Calu3 (cell line): ENCODE measurements at regions of chr1 and their contacts with region 1.

Region 1: DNA sequence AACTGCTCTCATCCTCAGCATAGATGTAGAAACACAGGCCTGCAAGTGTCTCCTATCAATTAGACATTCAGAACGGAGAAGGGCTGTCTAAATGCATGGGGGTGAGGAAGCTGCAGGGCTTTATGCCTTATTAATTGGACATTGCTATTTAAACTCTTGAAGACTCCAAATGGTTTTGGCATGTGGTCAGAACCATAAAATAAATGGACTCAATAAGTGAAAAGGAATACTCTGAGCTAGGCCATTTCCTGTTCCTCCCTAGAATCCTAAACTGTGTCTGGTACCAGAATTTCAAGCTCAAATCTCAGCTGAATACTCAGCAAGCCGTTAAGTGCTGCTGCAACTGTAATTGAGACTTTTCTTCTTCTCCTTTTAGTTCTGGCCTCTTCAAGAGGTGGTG is 80.4 kb upstream of the C1orf87 start:
- DNase-seq: no peak
- H3K4me3 Mint-ChIP-seq: no peak overlapping the region
- H3K27ac Mint-ChIP-seq: no peak overlapping the region
- H3K4me1 Mint-ChIP-seq: no peaks in the 10 kb centered on the region
- H3K27me3 Mint-ChIP-seq: no peaks in the 10 kb centered on the region
- CTCF ChIP-seq: no peak

Region 2: DNA sequence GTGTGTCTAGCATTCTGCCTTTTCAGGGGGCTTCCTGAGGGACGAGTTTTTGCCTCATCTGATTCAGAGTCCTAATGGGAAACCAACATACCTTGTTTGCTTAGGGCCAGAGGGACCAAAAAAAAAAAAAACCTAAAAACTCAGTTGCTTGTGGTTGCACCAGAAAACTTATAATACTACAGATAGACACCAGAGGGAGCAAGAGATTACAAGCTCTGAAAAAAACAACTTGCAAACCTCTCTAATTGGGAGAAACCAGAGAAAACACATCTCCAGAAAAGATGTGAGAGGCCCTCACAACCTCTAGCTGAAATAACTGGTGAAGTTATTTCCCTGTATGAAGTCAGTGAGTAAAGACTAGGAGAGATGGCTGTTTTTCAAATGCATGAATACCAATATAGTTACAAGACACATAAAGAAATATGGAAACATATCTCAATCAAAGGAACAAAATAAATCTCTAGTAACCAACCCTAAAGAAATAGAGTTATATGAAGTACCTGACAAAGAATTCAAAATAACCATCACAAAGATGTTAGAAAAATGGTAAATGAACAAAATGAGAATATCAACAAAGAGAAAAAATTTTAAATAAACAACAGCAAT is 694.7 kb after region 1 on chr1:
- CTCF ChIA-PET with region 1: interaction called, 3 read pairs
- intact Hi-C with region 1: loop called (anchors 2 kb)
- DNase-seq: no peak
- H3K4me3 Mint-ChIP-seq: no peak overlapping the region
- H3K27ac Mint-ChIP-seq: peak overlapping the region; percentile 49
- H3K4me1 Mint-ChIP-seq: peaks cover 20% of the 10 kb centered on the region
- H3K27me3 Mint-ChIP-seq: no peaks in the 10 kb centered on the region
- CTCF ChIP-seq: peak; percentile 60

Region 3: DNA sequence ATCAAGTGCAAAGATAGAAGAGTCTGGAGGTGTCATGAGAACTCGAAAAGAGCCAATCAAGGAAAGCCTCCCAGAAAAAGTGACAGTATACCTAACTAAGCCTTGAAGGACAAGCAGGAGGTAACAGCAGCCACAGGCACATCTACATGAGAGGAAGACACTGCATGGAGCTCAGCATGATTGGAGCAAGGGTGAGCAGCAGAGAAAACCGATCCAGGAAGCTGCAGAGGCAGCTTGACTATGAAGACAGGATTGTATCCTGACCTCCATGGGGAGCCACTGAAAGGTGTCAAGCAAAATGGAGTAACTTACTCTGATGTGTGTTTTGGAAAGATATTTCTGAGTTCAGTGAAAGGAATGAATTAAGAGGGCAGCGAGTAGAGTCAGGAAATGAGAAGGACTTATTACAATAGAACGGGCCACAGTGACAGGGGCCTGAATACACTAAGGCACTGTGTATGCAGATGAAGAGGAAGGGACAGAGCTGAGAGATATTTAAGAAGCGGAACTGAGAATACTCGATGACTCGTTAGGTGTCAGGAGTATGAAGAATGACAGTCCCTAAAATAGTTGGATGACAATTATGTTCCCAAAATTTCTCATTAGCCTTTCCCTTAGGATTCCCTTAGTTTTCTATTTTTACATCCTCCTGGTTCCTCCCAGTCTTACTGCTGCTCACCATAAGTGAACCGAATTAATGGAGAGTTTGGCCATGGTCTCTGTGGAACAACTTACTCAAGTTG is 789.1 kb after region 1 on chr1:
- CTCF ChIA-PET with region 1: no interaction called
- intact Hi-C with region 1: loop called (anchors 10 kb)
- DNase-seq: no peak
- H3K4me3 Mint-ChIP-seq: no peak overlapping the region
- H3K27ac Mint-ChIP-seq: peak overlapping the region; percentile 1
- H3K4me1 Mint-ChIP-seq: peaks cover 18% of the 10 kb centered on the region
- H3K27me3 Mint-ChIP-seq: no peaks in the 10 kb centered on the region
- CTCF ChIP-seq: no peak